CD4-positive, alpha-beta memory T cell (primary cell): ENCODE measurements at regions of chr20 and their contacts with region 1.

Region 1: DNA sequence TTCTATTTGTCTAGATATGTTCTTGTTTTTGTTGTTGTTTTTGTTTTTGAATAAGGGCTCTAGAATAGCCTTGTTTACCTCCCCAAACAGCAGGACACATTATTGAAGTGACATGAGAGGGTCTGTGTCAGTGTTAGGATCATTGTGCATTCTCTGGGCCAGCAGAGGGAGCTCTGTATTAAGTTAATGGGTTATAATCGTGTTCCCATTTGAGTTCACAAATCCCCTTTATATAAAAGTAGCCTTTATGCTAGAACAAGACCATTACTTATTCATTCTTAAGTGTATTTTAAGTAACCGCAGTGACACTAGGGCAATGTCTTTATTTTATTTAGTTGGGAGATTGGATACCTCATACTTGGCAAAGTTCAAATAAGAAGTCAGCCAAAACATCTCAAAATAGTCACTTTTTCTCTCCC is 44.8 kb downstream of the STK4 start:
- DNase-seq: peak; percentile 25 to 51 (median 40)
- H3K4me3 ChIP-seq: no peak overlapping the region
- H3K4me3 Mint-ChIP-seq: peak overlapping the region in 3 of 8 donors; percentile 17 to 54 (median 22)
- H3K27ac ChIP-seq: no peak overlapping the region
- H3K27ac Mint-ChIP-seq: peak overlapping the region in 3 of 7 donors; percentile 41 to 74 (median 57)
- H3K4me1 ChIP-seq: peaks cover 63% of the 10 kb centered on the region
- H3K4me1 Mint-ChIP-seq: peaks cover 47 to 81% (median 63%) of the 10 kb centered on the region in 4 donors
- H3K27me3 ChIP-seq: no peaks in the 10 kb centered on the region
- H3K27me3 Mint-ChIP-seq: no peaks in the 10 kb centered on the region

Region 2: DNA sequence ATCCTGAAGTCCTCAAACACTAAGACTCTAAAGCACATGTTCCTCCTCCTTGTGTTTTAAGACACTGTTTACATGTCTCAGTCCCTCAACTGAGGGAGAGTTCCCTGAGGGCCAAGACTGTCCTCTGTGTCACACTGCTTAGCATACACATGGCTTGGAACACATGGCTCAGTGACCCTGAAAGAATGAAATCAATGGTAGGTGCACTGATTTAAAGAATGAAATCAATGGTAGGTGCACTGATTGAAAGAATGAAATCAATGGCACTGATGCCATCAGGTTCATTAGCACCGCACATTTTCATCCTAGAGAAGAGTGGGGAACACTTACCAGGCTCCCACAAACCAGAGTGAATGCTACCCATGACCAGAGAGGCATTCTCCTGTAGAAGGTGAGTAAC is 60.7 kb before region 1 on chr20:
- CTCF ChIA-PET with region 1: interaction called, 10 read pairs
- POLR2A ChIA-PET with region 1: interaction called, 3 read pairs
- intact Hi-C with region 1: no loop called
- DNase-seq: no peak
- H3K4me3 ChIP-seq: no peak overlapping the region
- H3K4me3 Mint-ChIP-seq: no peak overlapping the region
- H3K27ac ChIP-seq: no peak overlapping the region
- H3K27ac Mint-ChIP-seq: peak overlapping the region in 4 of 7 donors; percentile 6 to 59 (median 42)
- H3K4me1 ChIP-seq: no peaks in the 10 kb centered on the region
- H3K4me1 Mint-ChIP-seq: peaks cover 13 to 20% (median 15%) of the 10 kb centered on the region in 4 donors
- H3K27me3 ChIP-seq: no peaks in the 10 kb centered on the region
- H3K27me3 Mint-ChIP-seq: no peaks in the 10 kb centered on the region

Region 3: DNA sequence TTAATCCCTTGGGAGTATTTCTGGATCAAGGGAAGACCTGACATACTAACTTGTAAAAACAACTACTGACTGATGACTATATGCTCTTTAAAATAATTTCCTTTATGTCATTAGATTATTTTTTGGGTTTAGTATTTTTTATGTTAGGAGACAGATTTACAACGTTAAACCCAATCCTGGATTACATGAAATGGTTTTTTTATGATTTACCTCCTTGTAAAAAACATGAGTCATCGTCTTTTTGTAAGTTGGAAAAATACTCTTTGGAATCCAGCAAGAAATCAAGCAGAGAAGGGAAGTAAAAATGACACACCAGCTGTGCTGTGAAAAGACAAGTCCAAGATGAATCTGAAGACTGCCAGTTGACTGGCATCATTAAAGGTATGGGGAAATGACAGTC is 38.1 kb before region 1 on chr20:
- CTCF ChIA-PET with region 1: interaction called, 10 read pairs
- POLR2A ChIA-PET with region 1: interaction called, 5 read pairs
- intact Hi-C with region 1: no loop called
- DNase-seq: no peak
- H3K4me3 ChIP-seq: no peak overlapping the region
- H3K4me3 Mint-ChIP-seq: peak overlapping the region in 6 of 8 donors; percentile 49 to 75 (median 65)
- H3K27ac ChIP-seq: no peak overlapping the region
- H3K27ac Mint-ChIP-seq: peak overlapping the region; percentile 36 to 89 (median 69)
- H3K4me1 ChIP-seq: peaks cover 84% of the 10 kb centered on the region
- H3K4me1 Mint-ChIP-seq: peaks cover 63 to 92% (median 81%) of the 10 kb centered on the region in 4 donors
- H3K27me3 ChIP-seq: no peaks in the 10 kb centered on the region
- H3K27me3 Mint-ChIP-seq: no peaks in the 10 kb centered on the region

Region 4: DNA sequence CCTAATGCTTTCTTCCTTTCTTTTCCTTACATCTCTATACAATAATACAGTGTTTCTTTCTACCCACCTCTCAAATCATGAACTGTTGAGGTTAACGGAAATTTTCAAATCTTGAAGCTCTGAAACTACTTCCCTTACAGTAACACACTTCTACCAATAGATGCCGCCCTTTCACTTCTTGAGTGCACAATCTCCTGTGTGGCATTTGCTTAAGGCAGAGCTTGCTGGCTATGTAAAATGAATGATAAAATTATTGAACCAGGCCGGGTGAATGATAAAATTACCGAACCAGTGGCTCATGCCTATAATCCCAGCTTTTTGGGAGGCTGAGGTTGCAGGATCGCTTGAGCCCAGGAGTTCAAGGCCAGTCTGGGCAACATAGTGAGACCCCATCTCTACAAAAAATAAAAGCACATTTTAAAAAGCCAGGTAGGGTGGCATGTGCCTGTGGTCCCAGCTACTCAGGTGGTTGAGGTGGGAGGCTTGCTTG is 33.0 kb after region 1 on chr20:
- CTCF ChIA-PET with region 1: interaction called, 12 read pairs
- POLR2A ChIA-PET with region 1: interaction called, 3 read pairs
- intact Hi-C with region 1: no loop called
- DNase-seq: peak; percentile 60 to 73 (median 64)
- H3K4me3 ChIP-seq: no peak overlapping the region
- H3K4me3 Mint-ChIP-seq: peak overlapping the region in 3 of 8 donors; percentile 1 to 17 (median 5)
- H3K27ac ChIP-seq: no peak overlapping the region
- H3K27ac Mint-ChIP-seq: peak overlapping the region; percentile 5 to 91 (median 58)
- H3K4me1 ChIP-seq: peaks cover 78% of the 10 kb centered on the region
- H3K4me1 Mint-ChIP-seq: peaks cover 49 to 85% (median 67%) of the 10 kb centered on the region in 4 donors
- H3K27me3 ChIP-seq: no peaks in the 10 kb centered on the region
- H3K27me3 Mint-ChIP-seq: no peaks in the 10 kb centered on the region

Region 5: DNA sequence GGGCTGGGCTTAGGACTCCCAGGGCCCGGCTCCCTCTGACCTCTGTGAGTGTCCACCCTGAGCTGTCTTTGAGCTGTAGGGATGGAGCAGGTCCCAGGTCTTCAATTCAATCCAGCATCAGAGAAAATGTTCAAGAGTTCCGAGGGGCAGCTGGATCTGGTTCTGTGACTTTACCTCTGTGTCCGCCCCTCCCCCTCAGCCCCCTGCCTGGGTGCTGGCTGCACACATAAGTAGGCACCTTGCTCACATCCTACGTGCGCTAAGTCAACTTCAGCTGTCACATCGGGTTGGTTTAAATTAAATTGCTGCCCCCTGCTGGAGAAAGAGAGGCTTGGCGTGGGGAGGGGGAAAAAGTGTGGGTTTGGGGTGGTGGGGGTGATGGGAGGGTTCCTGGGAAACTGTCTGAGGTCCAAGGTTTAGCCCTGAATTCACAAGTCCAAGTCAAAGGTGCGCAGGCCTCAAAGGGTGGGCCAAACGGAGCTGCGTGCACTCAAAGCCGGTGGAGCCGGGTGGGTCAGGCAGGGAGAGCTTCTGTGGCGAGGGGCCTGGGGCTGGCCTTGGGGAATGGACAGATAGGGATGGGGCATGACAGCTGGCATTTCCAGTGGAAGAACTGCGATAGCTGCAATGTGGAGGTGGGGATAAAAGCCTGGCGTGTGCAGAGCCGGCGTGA is 100.8 kb after region 1 on chr20:
- CTCF ChIA-PET with region 1: no interaction called
- POLR2A ChIA-PET with region 1: no interaction called
- intact Hi-C with region 1: loop called (anchors 1 kb)
- DNase-seq: no peak
- H3K4me3 ChIP-seq: no peak overlapping the region
- H3K4me3 Mint-ChIP-seq: no peak overlapping the region
- H3K27ac ChIP-seq: no peak overlapping the region
- H3K27ac Mint-ChIP-seq: no peak overlapping the region
- H3K4me1 ChIP-seq: peaks cover 4% of the 10 kb centered on the region
- H3K4me1 Mint-ChIP-seq: peaks cover 0 to 6% (median 2%) of the 10 kb centered on the region in 4 donors
- H3K27me3 ChIP-seq: no peaks in the 10 kb centered on the region
- H3K27me3 Mint-ChIP-seq: peaks cover 2 to 3% of the 10 kb centered on the region in 2 donors

Region 6: GRCh38 chr20:45153752-45154151 is 142.6 kb after region 1 on chr20:
- CTCF ChIA-PET with region 1: no interaction called
- POLR2A ChIA-PET with region 1: no interaction called
- intact Hi-C with region 1: no loop called
- DNase-seq: no peak
- H3K4me3 ChIP-seq: no peak overlapping the region
- H3K4me3 Mint-ChIP-seq: no peak overlapping the region
- H3K27ac ChIP-seq: no peak overlapping the region
- H3K27ac Mint-ChIP-seq: no peak overlapping the region
- H3K4me1 ChIP-seq: no peaks in the 10 kb centered on the region
- H3K4me1 Mint-ChIP-seq: no peaks in the 10 kb centered on the region
- H3K27me3 ChIP-seq: peaks cover 7% of the 10 kb centered on the region
- H3K27me3 Mint-ChIP-seq: peaks cover 26 to 35% of the 10 kb centered on the region in 2 donors